Common myeloid progenitor, CD34-positive (primary cell): ENCODE measurements at regions of chr5 and their contacts with region 1.

Region 1: GRCh38 chr5:135191084-135191826 is 157.2 kb upstream of the PITX1 start:
- DNase-seq: peak; percentile 76 to 83 (median 82)
- H3K4me3 ChIP-seq: peak overlapping the region; percentile 1 to 71 (median 51)
- H3K27ac ChIP-seq: no peak overlapping the region
- H3K4me1 ChIP-seq: peaks cover 0 to 9% (median 3%) of the 10 kb centered on the region in 4 experiments
- H3K27me3 ChIP-seq: peaks cover 0 to 37% (median 23%) of the 10 kb centered on the region in 5 experiments

Region 2: GRCh38 chr5:135203593-135204036 is 12.4 kb after region 1 on chr5:
- CTCF ChIA-PET with region 1: interaction called, 12 read pairs
- POLR2A ChIA-PET with region 1: no interaction called
- DNase-seq: no peak
- H3K4me3 ChIP-seq: no peak overlapping the region
- H3K27ac ChIP-seq: no peak overlapping the region
- H3K4me1 ChIP-seq: no peaks in the 10 kb centered on the region
- H3K27me3 ChIP-seq: peaks cover 0 to 5% (median 0%) of the 10 kb centered on the region in 5 experiments